SK-N-SH (cell line): ENCODE measurements at regions of chr3 and their contacts with region 1.

Region 1: GRCh38 chr3:149553781-149554451 is 79.4 kb downstream of the TM4SF4 start:
- DNase-seq: peak; percentile 37
- H3K4me3 ChIP-seq: peak overlapping the region; percentile 17 to 18; a peak in 1 of 4 replicates
- H3K27ac ChIP-seq: peak overlapping the region; percentile 92 to 95
- H3K4me1 ChIP-seq: peaks cover 24 to 49% of the 10 kb centered on the region in 2 experiments
- H3K27me3 ChIP-seq: no peaks in the 10 kb centered on the region
- CTCF ChIP-seq: no peak
- EP300 ChIP-seq: peak; percentile 67 to 74
- RAD21 ChIP-seq: no peak

Region 2: GRCh38 chr3:149536429-149536828 is 17.5 kb before region 1 on chr3:
- CTCF ChIA-PET with region 1: interaction called, 12 read pairs
- POLR2A ChIA-PET with region 1: no interaction called
- DNase-seq: peak; percentile 27
- H3K4me3 ChIP-seq: no peak overlapping the region
- H3K27ac ChIP-seq: peak overlapping the region in 1 of 2 experiments; percentile 47; a peak in 1 of 4 replicates
- H3K4me1 ChIP-seq: peaks cover 21 to 40% of the 10 kb centered on the region in 2 experiments
- H3K27me3 ChIP-seq: no peaks in the 10 kb centered on the region
- CTCF ChIP-seq: no peak
- EP300 ChIP-seq: no peak
- RAD21 ChIP-seq: no peak